ENCODE measurements at regions of chr10 and their contacts with region 1.

Region 1: GRCh38 chr10:73886085-73886529 is 11.8 kb upstream of the CAMK2G start:
- DNase-seq: peak; percentile 67 to 93
- H3K4me3 ChIP-seq: no peak overlapping the region
- H3K27ac ChIP-seq: peak overlapping the region in 4 of 5 donors; percentile 44 to 83 (median 77)
- H3K4me1 ChIP-seq: peaks cover 30 to 36% (median 32%) of the 10 kb centered on the region in 4 donors
- H3K27me3 ChIP-seq: no peaks in the 10 kb centered on the region
- CTCF ChIP-seq: peak in 6 of 7 experiments; percentile 36 to 87 (median 84)
- EP300 ChIP-seq: no peak
- POLR2A ChIP-seq: no peak

Region 2: GRCh38 chr10:73803680-73804286 is 82.3 kb before region 1 on chr10:
- intact Hi-C with region 1: no loop called
- DNase-seq: no peak
- H3K4me3 ChIP-seq: no peak overlapping the region
- H3K27ac ChIP-seq: peak overlapping the region in 2 of 5 donors; percentile 0 to 9
- H3K4me1 ChIP-seq: peaks cover 4 to 39% (median 25%) of the 10 kb centered on the region in 4 donors
- H3K27me3 ChIP-seq: no peaks in the 10 kb centered on the region
- CTCF ChIP-seq: no peak
- EP300 ChIP-seq: no peak
- POLR2A ChIP-seq: no peak

Region 3: DNA sequence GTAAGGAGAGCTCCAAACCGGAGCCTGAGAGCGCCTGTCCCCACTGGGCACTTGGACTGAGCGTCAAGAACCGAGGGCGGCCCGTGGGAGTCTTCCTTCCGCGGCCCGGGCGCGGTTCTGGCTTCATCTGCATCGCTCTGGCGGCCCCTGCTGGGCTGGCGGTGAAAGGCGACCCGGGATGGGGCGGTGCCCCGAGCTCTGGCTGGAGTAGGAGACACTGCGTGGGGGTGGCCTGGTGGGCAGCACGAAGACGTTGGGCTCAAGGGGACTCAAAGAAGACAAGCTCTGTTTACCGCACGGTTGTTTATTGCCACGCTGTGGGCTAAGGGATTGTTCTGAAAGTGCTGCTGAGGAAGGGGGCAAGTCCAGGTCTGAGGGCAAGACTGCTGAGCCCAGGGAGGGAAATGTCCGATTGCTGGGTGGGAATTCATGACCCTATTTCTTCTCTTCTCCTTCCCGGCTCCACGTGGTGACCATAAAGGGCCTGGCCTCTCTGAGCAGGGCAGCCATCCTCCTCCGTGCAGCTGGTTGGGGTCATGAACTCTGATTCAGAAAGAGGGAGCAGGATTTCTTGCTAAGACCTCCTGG is 54.6 kb after region 1 on chr10:
- intact Hi-C with region 1: loop called (anchors 5 kb)
- DNase-seq: peak; percentile 86 to 92
- H3K4me3 ChIP-seq: peak overlapping the region in 2 of 4 donors; percentile 17 to 25
- H3K27ac ChIP-seq: peak overlapping the region; percentile 38 to 61 (median 53)
- H3K4me1 ChIP-seq: peaks cover 6 to 20% (median 12%) of the 10 kb centered on the region in 4 donors
- H3K27me3 ChIP-seq: no peaks in the 10 kb centered on the region
- CTCF ChIP-seq: peak in 5 of 7 experiments; percentile 75 to 91 (median 89)
- EP300 ChIP-seq: no peak
- POLR2A ChIP-seq: no peak

Measured in stomach (tissue), 19 donors.